ENCODE measurements at regions of chr1 and their contacts with region 1.

Region 1: GRCh38 chr1:24186993-24187805 is at the start of gene IFNLR1:
- DNase-seq: peak; percentile 74
- ATAC-seq: peak; percentile 66
- H3K4me3 ChIP-seq: peak within 1 kb of the TSS; percentile 76
- H3K27ac ChIP-seq: peak within 1 kb of the TSS; percentile 56
- H3K4me1 ChIP-seq: peaks cover 48% of the 10 kb centered on the region
- H3K27me3 ChIP-seq: no peaks in the 10 kb centered on the region
- CTCF ChIP-seq: no peak
- total RNA-seq, gene IFNLR1: 8.9 and 9.5 TPM in 2 replicates

Region 2: GRCh38 chr1:24070821-24071393 is 116.3 kb before region 1 on chr1:
- CTCF ChIA-PET with region 1: no interaction called
- POLR2A ChIA-PET with region 1: no interaction called
- intact Hi-C with region 1: loop called (anchors 5 kb)
- DNase-seq: peak; percentile 94
- ATAC-seq: peak; percentile 97
- H3K4me3 ChIP-seq: no peak overlapping the region
- H3K27ac ChIP-seq: no peak overlapping the region
- H3K4me1 ChIP-seq: peaks cover 3% of the 10 kb centered on the region; the same call in 1 of the 2 replicates
- H3K27me3 ChIP-seq: no peaks in the 10 kb centered on the region
- CTCF ChIP-seq: peak; percentile 94

Region 3: DNA sequence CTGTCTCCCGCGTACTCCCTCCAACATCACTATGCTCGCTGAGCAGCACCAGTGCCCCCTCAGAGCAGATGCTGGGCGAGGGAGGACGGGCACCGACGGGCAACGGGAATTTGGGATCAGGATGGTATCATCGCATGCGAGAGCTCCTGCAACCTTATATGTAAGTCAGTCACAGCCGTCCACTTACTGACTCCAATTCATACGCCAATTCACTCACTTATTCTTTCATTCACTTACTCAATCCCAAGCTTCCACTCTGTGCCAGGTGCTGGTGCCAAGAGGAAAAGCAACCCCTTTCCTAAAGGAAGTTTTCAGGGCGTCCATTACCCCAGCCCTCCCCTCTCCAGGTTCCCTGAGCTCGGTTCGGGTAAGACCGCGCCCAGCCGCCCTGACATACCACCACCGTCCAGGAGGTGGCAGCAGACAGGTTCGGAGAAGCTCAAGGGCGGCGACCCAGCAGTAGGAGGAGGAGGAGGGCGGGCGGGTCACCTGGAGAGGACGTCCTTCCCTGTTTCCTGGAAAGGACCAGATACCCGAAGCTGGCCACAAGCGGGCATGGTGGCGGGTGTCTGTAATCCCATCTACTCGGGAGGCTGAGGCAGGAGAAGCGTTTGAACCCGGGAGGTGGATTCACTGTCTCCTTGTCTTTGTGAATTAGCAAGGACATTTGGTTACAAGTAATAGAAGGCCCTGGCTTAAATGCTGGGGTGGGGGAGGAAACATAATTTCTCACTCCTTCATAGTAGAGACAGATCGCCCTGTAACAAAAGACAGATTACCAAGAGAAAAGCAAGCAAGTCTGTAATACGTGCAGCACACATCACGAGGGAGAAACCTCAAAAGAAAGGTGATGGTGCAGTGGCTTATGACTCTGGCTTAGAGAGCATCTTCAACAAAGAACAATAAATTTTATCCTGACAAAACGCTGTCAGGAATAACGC is 36.7 kb before region 1 on chr1:
- CTCF ChIA-PET with region 1: interaction called, 12 read pairs
- POLR2A ChIA-PET with region 1: interaction called, 4 read pairs
- intact Hi-C with region 1: loop called (anchors 2 kb)
- DNase-seq: peak; percentile 95
- ATAC-seq: peak; percentile 92
- H3K4me3 ChIP-seq: peak overlapping the region; percentile 68
- H3K27ac ChIP-seq: peak overlapping the region; percentile 77
- H3K4me1 ChIP-seq: peaks cover 23% of the 10 kb centered on the region
- H3K27me3 ChIP-seq: no peaks in the 10 kb centered on the region
- CTCF ChIP-seq: peak; percentile 79

Region 4: DNA sequence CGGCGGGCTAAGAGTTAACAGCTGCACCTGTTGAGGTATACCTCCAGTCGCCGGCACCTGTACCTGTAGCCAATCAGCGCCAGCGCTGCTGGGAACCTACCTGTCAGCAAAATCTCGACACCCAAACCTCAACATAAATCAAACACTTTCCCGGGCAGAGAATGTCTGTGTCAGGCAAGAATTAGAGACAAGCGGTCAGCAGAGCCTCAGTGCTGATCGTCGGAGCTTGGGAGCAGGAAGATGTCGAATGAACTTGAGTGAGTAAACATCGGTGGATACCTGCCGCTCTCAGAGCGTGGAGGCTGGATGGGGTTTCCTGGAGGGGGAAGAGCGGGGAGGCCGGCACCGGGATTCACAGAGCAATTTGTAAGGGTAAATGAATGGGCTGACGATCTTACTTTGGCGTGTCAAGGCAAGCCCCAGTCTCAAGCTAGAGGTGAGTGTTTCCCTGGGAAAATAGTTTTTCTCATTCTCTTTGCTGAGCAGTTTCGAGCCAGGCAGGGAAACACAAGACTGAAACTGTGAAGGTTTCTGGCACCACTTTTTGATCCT is 132.2 kb after region 1 on chr1 and contains the start of gene GRHL3:
- CTCF ChIA-PET with region 1: no interaction called
- POLR2A ChIA-PET with region 1: no interaction called
- intact Hi-C with region 1: no loop called
- DNase-seq: peak; percentile 75
- ATAC-seq: peak; percentile 57
- H3K4me3 ChIP-seq: peak within 1 kb of the TSS; percentile 61
- H3K27ac ChIP-seq: peak within 1 kb of the TSS; percentile 55
- H3K4me1 ChIP-seq: peaks cover 72% of the 10 kb centered on the region
- H3K27me3 ChIP-seq: no peaks in the 10 kb centered on the region
- CTCF ChIP-seq: no peak
- total RNA-seq, gene GRHL3: 3.5 and 7.8 TPM in 2 replicates

Region 5: GRCh38 chr1:24847995-24848881 is 661.0 kb after region 1 on chr1:
- CTCF ChIA-PET with region 1: interaction called, 10 read pairs
- POLR2A ChIA-PET with region 1: no interaction called
- intact Hi-C with region 1: no loop called
- DNase-seq: peak; percentile 90
- ATAC-seq: peak; percentile 89
- H3K4me3 ChIP-seq: peak overlapping the region; percentile 76
- H3K27ac ChIP-seq: no peak overlapping the region
- H3K4me1 ChIP-seq: no peaks in the 10 kb centered on the region; the same call in 1 of the 2 replicates
- H3K27me3 ChIP-seq: no peaks in the 10 kb centered on the region
- CTCF ChIP-seq: peak; percentile 90